ENCODE measurements at regions of chr12 and their contacts with region 1.

Region 1: GRCh38 chr12:913919-914708 is 35.4 kb downstream of the RAD52 start:
- DNase-seq: peak; percentile 91
- ATAC-seq: peak; percentile 82
- H3K4me3 ChIP-seq: no peak overlapping the region
- H3K27ac ChIP-seq: no peak overlapping the region
- H3K4me1 ChIP-seq: peaks cover 4% of the 10 kb centered on the region
- H3K27me3 ChIP-seq: no peaks in the 10 kb centered on the region
- CTCF ChIP-seq: no peak
- POLR2A ChIP-seq: no peak
- RAD21 ChIP-seq: no peak

Region 2: GRCh38 chr12:949453-950191 is 35.5 kb after region 1 on chr12 and contains the start of gene RAD52:
- CTCF ChIA-PET with region 1: no interaction called
- POLR2A ChIA-PET with region 1: no interaction called
- dilution Hi-C with region 1: no loop called
- in situ Hi-C with region 1: no loop called
- intact Hi-C with region 1: no loop called
- DNase-seq: peak; percentile 99
- ATAC-seq: peak; percentile 89
- H3K4me3 ChIP-seq: peak within 1 kb of the TSS; percentile 72
- H3K27ac ChIP-seq: peak within 1 kb of the TSS; percentile 86
- H3K4me1 ChIP-seq: peaks cover 4% of the 10 kb centered on the region
- H3K27me3 ChIP-seq: no peaks in the 10 kb centered on the region
- CTCF ChIP-seq: peak; percentile 97
- POLR2A ChIP-seq: peak; percentile 78; the same call in 1 of the 2 replicates
- RAD21 ChIP-seq: peak; percentile 83
- total RNA-seq, gene RAD52: 9.7 and 11.3 TPM in 2 replicates

Region 3: DNA sequence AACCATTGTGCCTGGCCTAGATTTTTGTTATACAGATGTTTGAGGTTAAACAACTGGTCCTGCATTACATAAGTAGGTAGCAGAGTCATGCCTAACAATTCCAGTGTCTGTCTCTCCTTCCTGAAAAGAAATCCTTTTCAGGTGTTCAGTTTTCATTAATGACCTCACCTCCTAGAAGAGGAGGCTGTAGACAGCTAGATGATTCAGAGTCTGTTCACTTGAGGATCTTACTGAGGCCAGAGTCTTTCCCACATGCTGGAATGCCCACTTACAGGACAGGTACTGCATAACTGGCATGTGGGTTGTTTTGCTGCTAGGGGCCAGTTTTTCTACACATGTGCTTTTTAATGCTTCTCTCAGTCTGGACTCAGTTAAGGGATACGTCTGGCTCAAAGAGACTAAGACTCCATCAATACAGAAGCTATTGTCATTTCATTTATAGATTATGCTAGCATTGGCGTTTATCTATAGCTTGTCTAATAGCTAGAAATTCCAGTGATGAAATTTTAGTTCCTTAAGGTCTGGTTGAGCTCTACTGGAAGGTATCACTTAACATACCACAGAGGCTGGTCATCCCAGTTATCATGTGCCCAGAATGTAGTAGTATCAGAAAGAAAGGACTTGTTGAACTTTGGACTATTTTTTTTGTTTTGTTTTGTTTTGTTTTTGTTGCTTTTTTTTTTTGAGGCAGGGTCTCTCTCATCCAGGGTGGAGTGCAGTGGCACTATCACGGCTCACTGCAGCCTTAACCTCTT is 283.3 kb after region 1 on chr12:
- CTCF ChIA-PET with region 1: no interaction called
- POLR2A ChIA-PET with region 1: no interaction called
- dilution Hi-C with region 1: no loop called
- in situ Hi-C with region 1: no loop called
- intact Hi-C with region 1: no loop called
- DNase-seq: peak; percentile 57
- ATAC-seq: peak; percentile 53
- H3K4me3 ChIP-seq: no peak overlapping the region
- H3K27ac ChIP-seq: no peak overlapping the region
- H3K4me1 ChIP-seq: peaks cover 4% of the 10 kb centered on the region
- H3K27me3 ChIP-seq: no peaks in the 10 kb centered on the region
- CTCF ChIP-seq: no peak
- POLR2A ChIP-seq: no peak
- RAD21 ChIP-seq: no peak

Region 4: DNA sequence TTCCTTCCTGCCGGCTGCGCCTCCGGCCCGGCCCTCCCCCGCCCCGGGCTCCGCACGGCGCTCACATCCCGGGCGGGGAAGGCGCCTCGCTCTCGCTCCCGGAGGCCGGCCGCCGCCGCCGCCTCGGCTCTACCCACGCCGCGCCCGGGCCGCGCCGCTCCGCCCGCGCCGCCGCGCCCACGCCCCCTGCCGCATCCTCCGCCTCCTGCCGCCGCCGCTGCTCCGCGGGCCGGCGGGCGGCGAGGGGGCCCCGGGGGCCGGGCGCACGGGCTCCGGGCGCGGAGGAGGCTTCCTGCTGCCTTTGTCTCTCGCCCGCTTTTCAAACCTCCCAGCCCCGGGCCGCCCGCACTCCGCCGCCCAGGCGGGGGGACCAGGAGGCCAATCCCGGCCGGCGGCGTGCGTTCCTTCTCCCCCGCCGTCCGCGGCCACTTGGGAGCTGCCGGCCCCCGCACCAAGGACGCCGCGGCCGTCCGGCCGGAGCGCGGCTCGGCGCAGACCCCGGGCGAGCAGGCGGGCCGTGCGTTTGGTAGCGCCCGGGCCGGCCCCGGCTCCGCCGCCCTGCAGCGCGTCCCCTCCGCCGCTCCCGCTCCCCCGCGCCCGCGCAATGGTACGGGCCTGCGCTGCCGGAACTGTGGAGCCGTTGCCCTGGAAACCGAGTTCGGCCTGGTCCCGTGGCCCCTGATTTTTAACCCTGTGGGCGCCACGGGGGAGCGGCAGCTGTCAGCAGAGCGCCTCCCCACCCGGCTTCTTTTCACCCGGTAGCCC is 680.3 kb after region 1 on chr12 and contains the start of gene FBXL14:
- CTCF ChIA-PET with region 1: no interaction called
- POLR2A ChIA-PET with region 1: no interaction called
- dilution Hi-C with region 1: no loop called
- in situ Hi-C with region 1: loop called (anchors 25 kb)
- intact Hi-C with region 1: no loop called
- DNase-seq: peak; percentile 79
- ATAC-seq: peak; percentile 67
- H3K4me3 ChIP-seq: peak within 1 kb of the TSS; percentile 90
- H3K27ac ChIP-seq: peak within 1 kb of the TSS; percentile 66
- H3K4me1 ChIP-seq: peaks cover 20% of the 10 kb centered on the region
- H3K27me3 ChIP-seq: no peaks in the 10 kb centered on the region
- CTCF ChIP-seq: no peak
- POLR2A ChIP-seq: no peak
- RAD21 ChIP-seq: no peak
- total RNA-seq, gene FBXL14: 4.7 TPM in 2 replicates

Region 5: GRCh38 chr12:2138871-2139308 is 1224.8 kb after region 1 on chr12:
- CTCF ChIA-PET with region 1: no interaction called
- POLR2A ChIA-PET with region 1: no interaction called
- dilution Hi-C with region 1: no loop called
- in situ Hi-C with region 1: no loop called
- intact Hi-C with region 1: no loop called
- DNase-seq: peak; percentile 43
- ATAC-seq: peak; percentile 64
- H3K4me3 ChIP-seq: no peak overlapping the region
- H3K27ac ChIP-seq: no peak overlapping the region
- H3K4me1 ChIP-seq: 0 out of 2 replicates have a peak, but pooled peaks cover 2% of the 10 kb centered on the region
- H3K27me3 ChIP-seq: no peaks in the 10 kb centered on the region
- CTCF ChIP-seq: no peak
- POLR2A ChIP-seq: no peak
- RAD21 ChIP-seq: no peak